ENCODE measurements at regions of chr17 and their contacts with region 1.

Region 1: GRCh38 chr17:69523244-69523861 is 108.9 kb downstream of the MAP2K6 start:
- DNase-seq: peak in 1 of 2 experiments; percentile 21
- H3K4me3 ChIP-seq: no peak overlapping the region
- H3K27ac ChIP-seq: no peak overlapping the region
- H3K4me1 ChIP-seq: no peaks in the 10 kb centered on the region
- H3K27me3 ChIP-seq: no peaks in the 10 kb centered on the region
- CTCF ChIP-seq: peak; percentile 10 to 89 (median 72)
- EP300 ChIP-seq: no peak
- POLR2A ChIP-seq: no peak
- RAD21 ChIP-seq: peak; percentile 84 to 85

Region 2: GRCh38 chr17:69358688-69359596 is 164.4 kb before region 1 on chr17:
- CTCF ChIA-PET with region 1: interaction called, 50 read pairs
- POLR2A ChIA-PET with region 1: no interaction called
- DNase-seq: peak in 1 of 2 experiments; percentile 21
- H3K4me3 ChIP-seq: no peak overlapping the region
- H3K27ac ChIP-seq: no peak overlapping the region
- H3K4me1 ChIP-seq: peaks cover 0 to 9% (median 0%) of the 10 kb centered on the region in 4 experiments; a peak in 1 of 7 replicates
- H3K27me3 ChIP-seq: no peaks in the 10 kb centered on the region
- CTCF ChIP-seq: peak; percentile 69 to 79 (median 72)
- EP300 ChIP-seq: no peak
- POLR2A ChIP-seq: no peak
- RAD21 ChIP-seq: peak; percentile 72 to 75

Region 3: GRCh38 chr17:69414408-69415274 is 108.7 kb before region 1 on chr17 and contains the start of gene MAP2K6:
- CTCF ChIA-PET with region 1: interaction called, 17 read pairs
- POLR2A ChIA-PET with region 1: interaction called, 3 read pairs
- DNase-seq: peak; percentile 46 to 85
- H3K4me3 ChIP-seq: peak within 1 kb of the TSS; percentile 72 to 85 (median 78)
- H3K27ac ChIP-seq: no peak within 1 kb of the TSS
- H3K4me1 ChIP-seq: peaks cover 0 to 13% (median 2%) of the 10 kb centered on the region in 4 experiments; a peak in 5 of 7 replicates
- H3K27me3 ChIP-seq: no peaks in the 10 kb centered on the region
- CTCF ChIP-seq: no peak
- EP300 ChIP-seq: no peak
- POLR2A ChIP-seq: peak in 1 of 2 experiments; percentile 38; a peak in 1 of 3 replicates
- RAD21 ChIP-seq: no peak
- total RNA-seq, gene MAP2K6: 42.2 and 44.1 TPM in 2 replicates

Region 4: GRCh38 chr17:69511250-69511649 is 12.1 kb before region 1 on chr17:
- CTCF ChIA-PET with region 1: interaction called, 81 read pairs
- POLR2A ChIA-PET with region 1: no interaction called
- DNase-seq: no peak
- H3K4me3 ChIP-seq: no peak overlapping the region
- H3K27ac ChIP-seq: no peak overlapping the region
- H3K4me1 ChIP-seq: peaks cover 0 to 4% (median 0%) of the 10 kb centered on the region in 4 experiments; a peak in 1 of 7 replicates
- H3K27me3 ChIP-seq: no peaks in the 10 kb centered on the region
- CTCF ChIP-seq: no peak
- EP300 ChIP-seq: no peak
- POLR2A ChIP-seq: no peak
- RAD21 ChIP-seq: no peak

Region 5: DNA sequence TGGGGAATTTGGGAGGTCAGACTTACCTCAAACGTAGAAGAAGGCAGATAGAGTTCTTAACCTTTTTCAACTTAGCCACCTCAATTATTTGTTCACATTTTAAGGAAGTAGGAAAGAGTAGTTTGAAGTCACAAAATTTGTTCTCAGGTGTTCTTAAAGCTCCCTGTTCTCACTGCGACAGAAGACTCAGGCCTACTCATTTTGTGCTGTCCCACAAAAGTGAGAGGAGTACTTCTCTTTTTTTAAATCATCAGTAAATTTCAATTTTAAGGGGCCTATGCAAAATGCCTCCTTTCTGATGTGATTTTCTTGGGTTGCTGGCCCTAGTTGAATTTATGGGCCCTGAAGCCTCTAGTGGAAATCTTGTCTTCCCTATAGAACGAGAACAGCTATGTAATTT is 24.6 kb after region 1 on chr17:
- CTCF ChIA-PET with region 1: interaction called, 13 read pairs
- POLR2A ChIA-PET with region 1: no interaction called
- DNase-seq: no peak
- H3K4me3 ChIP-seq: no peak overlapping the region
- H3K27ac ChIP-seq: no peak overlapping the region
- H3K4me1 ChIP-seq: no peaks in the 10 kb centered on the region; a peak in 1 of 7 replicates
- H3K27me3 ChIP-seq: no peaks in the 10 kb centered on the region
- CTCF ChIP-seq: no peak
- EP300 ChIP-seq: no peak
- POLR2A ChIP-seq: no peak
- RAD21 ChIP-seq: no peak